Adrenal gland (tissue), 19 donors: ENCODE measurements at regions of chr10 and their contacts with region 1.

Region 1: DNA sequence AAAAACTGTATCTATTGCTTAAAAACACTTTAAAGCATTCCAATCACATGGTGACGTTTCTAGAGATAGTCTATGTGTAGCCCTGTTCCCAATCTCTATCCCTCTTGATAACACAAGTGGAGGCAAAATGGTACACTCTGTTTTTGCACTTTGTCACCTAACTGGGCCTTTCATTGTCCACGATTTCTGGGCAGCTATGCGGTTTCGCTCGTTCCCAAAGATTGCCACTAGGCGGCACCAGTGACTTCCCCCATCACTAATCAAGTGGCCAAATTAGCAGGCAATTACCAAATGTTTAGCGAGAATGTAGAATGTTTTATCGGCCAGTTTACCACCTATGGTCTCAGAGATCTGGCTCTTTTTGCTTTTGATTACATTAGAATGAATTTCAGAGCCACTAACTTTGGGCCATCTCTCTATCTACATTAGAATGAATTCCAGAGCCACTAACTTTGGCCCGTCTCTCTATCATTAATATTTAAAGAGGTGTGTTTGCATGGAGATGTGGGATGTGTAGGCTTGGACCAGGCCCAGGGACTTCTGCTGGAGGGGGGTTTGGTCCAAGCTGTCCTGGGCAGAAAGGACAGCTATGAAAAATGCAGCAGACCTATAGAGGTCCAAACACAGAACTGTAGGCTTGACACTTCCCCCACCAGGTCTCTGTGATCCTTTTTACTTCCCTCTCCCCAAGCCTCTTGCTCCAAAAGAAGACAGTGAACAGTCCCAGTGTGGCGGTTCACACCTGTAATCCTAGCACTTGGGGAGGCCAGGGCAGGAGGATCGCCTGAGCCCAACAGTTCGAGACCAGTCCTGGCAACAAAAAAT is 90.1 kb downstream of the EPC1 start:
- DNase-seq: peak; percentile 48 to 86 (median 66)
- H3K4me3 ChIP-seq: no peak overlapping the region
- H3K27ac ChIP-seq: no peak overlapping the region
- H3K4me1 ChIP-seq: no peaks in the 10 kb centered on the region
- H3K27me3 ChIP-seq: no peaks in the 10 kb centered on the region
- CTCF ChIP-seq: peak; percentile 80 to 93 (median 88)
- POLR2A ChIP-seq: no peak

Region 2: GRCh38 chr10:32346134-32346550 is 89.3 kb after region 1 on chr10:
- intact Hi-C with region 1: loop called (anchors 5 to 10 kb)
- DNase-seq: peak; percentile 95 to 98 (median 97)
- H3K4me3 ChIP-seq: peak overlapping the region; percentile 29 to 94 (median 89)
- H3K27ac ChIP-seq: peak overlapping the region; percentile 95 to 100 (median 100)
- H3K4me1 ChIP-seq: peaks cover 18 to 51% of the 10 kb centered on the region in 2 donors
- H3K27me3 ChIP-seq: no peaks in the 10 kb centered on the region
- CTCF ChIP-seq: peak; percentile 87 to 99 (median 94)
- POLR2A ChIP-seq: peak; percentile 15 to 72

Region 3: DNA sequence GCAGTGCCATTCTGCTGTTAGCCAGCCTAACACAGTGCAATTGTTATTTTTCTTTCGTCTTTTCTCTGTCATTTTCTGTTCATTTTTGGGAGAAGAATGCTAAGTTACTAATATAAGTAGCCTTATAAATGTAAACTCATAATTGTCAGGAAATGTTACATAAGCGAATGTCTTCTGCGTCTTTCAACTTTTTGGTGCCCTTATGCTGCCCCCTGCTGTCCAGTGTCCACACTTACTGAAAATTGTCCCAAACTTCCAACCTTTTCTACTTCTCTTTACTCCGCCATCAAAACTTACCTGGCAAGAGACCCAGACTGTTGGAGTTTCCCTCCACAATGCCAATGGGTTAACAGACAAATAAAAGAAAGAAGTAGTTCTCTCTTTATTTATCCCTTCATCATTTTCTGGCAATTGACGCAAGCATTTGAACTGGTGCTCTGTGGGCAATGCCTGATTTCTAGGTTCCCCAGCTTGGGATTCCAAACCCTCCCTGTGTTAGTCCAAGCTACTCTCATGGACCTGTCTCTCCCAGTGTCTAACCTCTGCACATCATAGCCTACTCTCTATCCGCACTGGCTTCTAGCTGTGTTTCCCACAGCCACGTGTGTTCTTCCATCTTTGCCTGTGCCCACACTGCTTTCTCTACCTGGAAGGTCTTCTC is 111.1 kb after region 1 on chr10:
- intact Hi-C with region 1: no loop called
- DNase-seq: peak; percentile 58 to 83 (median 74)
- H3K4me3 ChIP-seq: no peak overlapping the region
- H3K27ac ChIP-seq: peak overlapping the region in 1 of 5 donors; percentile 0
- H3K4me1 ChIP-seq: peaks cover 0 to 35% of the 10 kb centered on the region in 2 donors
- H3K27me3 ChIP-seq: no peaks in the 10 kb centered on the region
- CTCF ChIP-seq: peak; percentile 67 to 82 (median 79)
- POLR2A ChIP-seq: no peak